ENCODE measurements at regions of chr5 and their contacts with region 1.

Region 1: GRCh38 chr5:96729156-96729555 is 67.0 kb downstream of the CAST start:
- DNase-seq: no peak
- H3K4me3 ChIP-seq: no peak overlapping the region
- H3K27ac ChIP-seq: no peak overlapping the region
- H3K4me1 ChIP-seq: no peaks in the 10 kb centered on the region
- H3K27me3 ChIP-seq: no peaks in the 10 kb centered on the region
- CTCF ChIP-seq: no peak
- POLR2A ChIP-seq: no peak

Region 2: GRCh38 chr5:96629774-96630173 is 99.4 kb before region 1 on chr5:
- CTCF ChIA-PET with region 1: no interaction called
- POLR2A ChIA-PET with region 1: no interaction called
- dilution Hi-C with region 1: no loop called
- intact Hi-C with region 1: no loop called
- DNase-seq: peak; percentile 44
- H3K4me3 ChIP-seq: no peak overlapping the region
- H3K27ac ChIP-seq: no peak overlapping the region
- H3K4me1 ChIP-seq: peaks cover 12% of the 10 kb centered on the region
- H3K27me3 ChIP-seq: no peaks in the 10 kb centered on the region
- CTCF ChIP-seq: no peak
- POLR2A ChIP-seq: no peak

Region 3: DNA sequence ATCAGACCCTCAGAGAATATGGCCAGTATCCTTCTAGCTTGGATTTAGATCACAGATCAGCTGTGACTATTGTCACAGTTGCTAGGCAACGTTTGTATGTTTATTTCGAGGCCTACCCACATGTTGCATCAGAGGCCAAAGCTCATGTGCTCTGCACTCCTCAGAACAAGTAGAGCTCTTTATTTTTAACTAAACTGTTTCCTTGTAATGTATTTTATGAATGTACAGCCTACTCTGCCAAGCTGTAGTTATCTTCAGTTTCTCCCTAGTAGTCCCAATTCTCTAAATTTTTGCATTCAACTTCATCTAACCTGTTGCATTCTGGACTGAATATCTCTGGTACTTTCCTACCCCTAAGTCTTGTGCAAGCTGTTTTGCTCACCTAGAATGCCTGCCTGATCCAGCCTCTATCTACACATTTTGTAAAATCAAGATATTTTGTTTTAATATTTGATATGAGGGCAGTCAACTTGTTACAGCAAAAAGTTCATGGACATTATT is 14.2 kb before region 1 on chr5:
- CTCF ChIA-PET with region 1: interaction called, 15 read pairs
- POLR2A ChIA-PET with region 1: no interaction called
- dilution Hi-C with region 1: no loop called
- intact Hi-C with region 1: no loop called
- DNase-seq: peak; percentile 50
- H3K4me3 ChIP-seq: no peak overlapping the region
- H3K27ac ChIP-seq: no peak overlapping the region
- H3K4me1 ChIP-seq: no peaks in the 10 kb centered on the region
- H3K27me3 ChIP-seq: no peaks in the 10 kb centered on the region
- CTCF ChIP-seq: no peak
- POLR2A ChIP-seq: no peak